Activated naive CD4-positive, alpha-beta T cell treated with anti-CD3 and anti-CD28 coated beads, Interleukin-2, amount 10 ng/mL, durations not matched to agents 7 days and 5 days (primary cell): ENCODE measurements at regions of chrX and their contacts with region 1.

Region 1: DNA sequence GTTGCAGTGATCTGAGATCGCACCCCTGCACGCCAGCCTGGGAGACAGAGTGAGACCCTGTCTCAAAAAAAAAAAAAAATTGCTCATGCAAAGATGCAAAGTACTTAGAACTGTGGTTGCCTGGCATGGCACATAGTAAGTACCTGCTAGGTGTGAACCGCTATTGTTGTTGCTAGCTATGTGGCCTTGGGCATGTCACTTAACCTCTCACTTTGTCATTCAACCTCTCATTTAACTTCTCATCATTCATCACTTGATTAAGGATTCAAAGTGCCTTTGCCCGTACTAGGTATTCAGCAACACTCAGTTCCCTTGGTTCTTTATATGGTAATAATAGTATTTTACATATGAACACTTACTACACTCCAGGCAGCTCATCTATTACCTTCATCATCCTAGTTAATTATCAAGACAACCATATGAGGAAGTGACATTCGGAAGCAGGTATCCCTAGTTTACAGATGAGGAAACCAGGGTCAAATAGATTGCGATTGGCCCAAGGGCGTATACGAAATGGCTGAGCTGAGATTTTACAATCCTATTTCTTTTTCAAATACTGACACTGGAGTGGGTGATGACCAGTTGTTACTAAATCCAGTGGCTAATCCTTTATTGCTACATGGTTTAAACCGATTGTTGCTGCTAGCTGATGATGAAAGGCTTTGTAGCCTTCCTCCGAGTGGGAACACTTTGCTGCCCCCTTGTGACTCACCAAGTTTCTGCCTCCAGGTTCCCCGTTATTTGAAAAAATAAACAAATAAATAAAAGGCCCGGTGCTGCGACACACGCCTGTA is 28.8 kb upstream of the SOWAHD start:
- DNase-seq: peak; percentile 75
- H3K4me3 Mint-ChIP-seq: no peak overlapping the region
- H3K27ac Mint-ChIP-seq: no peak overlapping the region
- H3K4me1 Mint-ChIP-seq: peaks cover 7% of the 10 kb centered on the region
- H3K27me3 Mint-ChIP-seq: peaks cover 8% of the 10 kb centered on the region

Region 2: DNA sequence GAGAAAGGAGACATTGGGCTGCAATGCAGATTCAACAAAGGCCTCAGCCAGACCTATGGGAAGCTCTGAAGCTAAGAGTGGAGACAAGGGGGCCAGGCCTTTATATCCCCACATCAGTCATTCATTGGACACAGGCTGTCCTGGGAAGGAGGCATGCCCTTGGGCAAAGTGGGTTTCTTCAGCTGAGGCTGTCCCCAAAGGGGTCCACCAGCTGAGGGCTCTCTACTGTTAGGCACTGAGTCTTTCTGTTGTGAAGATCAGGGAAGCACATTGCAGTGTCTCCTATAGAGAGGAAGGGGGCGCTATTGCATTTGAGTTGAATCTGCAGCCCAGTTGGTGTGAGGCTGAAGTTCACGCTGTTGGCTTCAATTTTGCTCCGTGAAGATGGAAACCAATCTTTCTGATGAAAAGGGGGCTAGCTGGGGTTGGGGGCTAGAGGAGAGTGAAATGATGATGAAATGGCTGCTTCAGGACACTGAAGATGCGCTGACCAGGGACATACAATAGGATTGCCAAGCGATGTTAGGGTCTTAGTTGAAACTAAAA is 213.4 kb before region 1 on chrX:
- CTCF ChIA-PET with region 1: interaction called, 26 read pairs
- DNase-seq: peak; percentile 45
- H3K4me3 Mint-ChIP-seq: no peak overlapping the region
- H3K27ac Mint-ChIP-seq: no peak overlapping the region
- H3K4me1 Mint-ChIP-seq: peaks cover 4% of the 10 kb centered on the region
- H3K27me3 Mint-ChIP-seq: no peaks in the 10 kb centered on the region

Region 3: DNA sequence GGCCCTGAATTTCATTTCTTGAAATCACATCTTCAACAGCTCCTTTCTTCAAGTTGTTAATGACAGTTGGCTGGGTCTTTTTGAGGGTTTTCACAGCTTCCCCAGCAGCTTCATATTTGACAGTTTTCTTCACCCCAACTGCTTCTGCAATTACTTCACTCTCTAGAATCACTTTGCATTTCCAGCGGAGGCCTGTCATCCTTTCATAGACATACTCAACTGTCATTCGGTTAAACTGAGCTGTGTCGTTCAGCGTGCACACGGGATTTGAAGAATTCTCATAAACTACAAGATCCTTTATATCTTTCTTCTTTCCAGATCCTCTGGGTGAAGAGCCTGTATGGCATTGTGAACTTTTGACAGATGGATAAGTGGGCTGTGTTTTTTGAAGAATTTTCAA is 139.8 kb before region 1 on chrX:
- CTCF ChIA-PET with region 1: no interaction called
- DNase-seq: no peak
- H3K4me3 Mint-ChIP-seq: no peak overlapping the region
- H3K27ac Mint-ChIP-seq: no peak overlapping the region
- H3K4me1 Mint-ChIP-seq: peaks cover 5% of the 10 kb centered on the region
- H3K27me3 Mint-ChIP-seq: no peaks in the 10 kb centered on the region

Region 4: DNA sequence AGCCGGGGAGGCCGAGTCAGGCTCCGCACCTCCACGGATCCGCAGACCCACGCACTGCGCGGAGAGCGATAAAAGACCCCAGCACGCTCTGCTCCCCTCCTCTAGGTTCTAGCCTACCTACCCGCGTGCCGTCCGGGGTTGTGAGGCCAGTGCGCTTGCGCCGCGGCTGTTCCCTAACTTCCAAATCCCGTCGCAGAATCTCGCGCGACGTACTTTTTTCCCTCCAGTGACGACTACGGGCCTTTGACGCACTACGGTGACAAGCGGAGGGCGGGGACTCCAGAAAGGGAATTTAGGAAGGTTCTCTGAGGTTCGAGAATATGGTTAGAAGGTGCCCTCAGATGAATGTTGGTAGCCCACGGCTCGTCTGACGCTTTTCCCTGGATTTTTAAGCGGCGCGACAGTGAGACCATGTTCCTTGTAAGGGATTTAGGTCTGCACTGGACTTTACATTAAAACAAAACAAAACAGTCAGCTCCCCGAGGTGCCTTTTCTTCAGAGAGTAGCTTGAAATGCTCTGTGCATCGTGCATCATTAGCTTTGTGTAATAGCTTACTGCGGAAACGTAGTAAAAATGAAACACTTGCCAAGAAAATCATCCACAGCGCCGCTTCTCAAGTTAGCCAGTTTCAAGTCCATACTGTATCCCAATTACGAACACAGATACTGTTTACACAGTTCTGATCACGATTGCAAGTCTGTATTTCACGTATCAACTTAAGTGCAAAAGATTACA is 123.2 kb before region 1 on chrX and contains the start of gene NKRF:
- CTCF ChIA-PET with region 1: interaction called, 31 read pairs
- DNase-seq: peak; percentile 93
- H3K4me3 Mint-ChIP-seq: peak within 1 kb of the TSS; percentile 94
- H3K27ac Mint-ChIP-seq: peak within 1 kb of the TSS; percentile 98
- H3K4me1 Mint-ChIP-seq: peaks cover 33% of the 10 kb centered on the region
- H3K27me3 Mint-ChIP-seq: no peaks in the 10 kb centered on the region

Region 5: GRCh38 chrX:119698845-119699244 is 30.8 kb before region 1 on chrX:
- CTCF ChIA-PET with region 1: interaction called, 13 read pairs
- DNase-seq: no peak
- H3K4me3 Mint-ChIP-seq: no peak overlapping the region
- H3K27ac Mint-ChIP-seq: no peak overlapping the region
- H3K4me1 Mint-ChIP-seq: peaks cover 11% of the 10 kb centered on the region
- H3K27me3 Mint-ChIP-seq: peaks cover 14% of the 10 kb centered on the region